Keratinocyte (primary cell): ENCODE measurements at regions of chr15 and their contacts with region 1.

Region 1: GRCh38 chr15:89614164-89614563 is 38.9 kb downstream of the TICRR start:
- DNase-seq: no peak
- H3K4me3 ChIP-seq: no peak overlapping the region
- H3K27ac ChIP-seq: no peak overlapping the region
- H3K4me1 ChIP-seq: no peaks in the 10 kb centered on the region
- H3K27me3 ChIP-seq: no peaks in the 10 kb centered on the region
- CTCF ChIP-seq: no peak

Region 2: GRCh38 chr15:89714775-89715174 is 100.6 kb after region 1 on chr15:
- dilution Hi-C with region 1: loop called (anchors 25 kb)
- DNase-seq: no peak
- H3K4me3 ChIP-seq: no peak overlapping the region
- H3K27ac ChIP-seq: no peak overlapping the region
- H3K4me1 ChIP-seq: no peaks in the 10 kb centered on the region
- H3K27me3 ChIP-seq: no peaks in the 10 kb centered on the region
- CTCF ChIP-seq: no peak